CD8-positive, alpha-beta T cell (primary cell): ENCODE measurements at regions of chr1 and their contacts with region 1.

Region 1: GRCh38 chr1:201828820-201829774 is at the start of gene IPO9:
- DNase-seq: peak; percentile 89 to 96 (median 95)
- ATAC-seq: peak; percentile 96
- H3K4me3 ChIP-seq: peak within 1 kb of the TSS; percentile 95 to 100
- H3K4me3 Mint-ChIP-seq: peak within 1 kb of the TSS; percentile 97
- H3K27ac ChIP-seq: peak within 1 kb of the TSS; percentile 90
- H3K27ac Mint-ChIP-seq: peak within 1 kb of the TSS; percentile 93
- H3K4me1 ChIP-seq: peaks cover 34% of the 10 kb centered on the region
- H3K4me1 Mint-ChIP-seq: peaks cover 42% of the 10 kb centered on the region
- H3K27me3 ChIP-seq: no peaks in the 10 kb centered on the region
- H3K27me3 Mint-ChIP-seq: no peaks in the 10 kb centered on the region
- CTCF ChIP-seq: peak; percentile 96
- total RNA-seq, gene IPO9: 14.4 to 19.2 TPM

Region 2: DNA sequence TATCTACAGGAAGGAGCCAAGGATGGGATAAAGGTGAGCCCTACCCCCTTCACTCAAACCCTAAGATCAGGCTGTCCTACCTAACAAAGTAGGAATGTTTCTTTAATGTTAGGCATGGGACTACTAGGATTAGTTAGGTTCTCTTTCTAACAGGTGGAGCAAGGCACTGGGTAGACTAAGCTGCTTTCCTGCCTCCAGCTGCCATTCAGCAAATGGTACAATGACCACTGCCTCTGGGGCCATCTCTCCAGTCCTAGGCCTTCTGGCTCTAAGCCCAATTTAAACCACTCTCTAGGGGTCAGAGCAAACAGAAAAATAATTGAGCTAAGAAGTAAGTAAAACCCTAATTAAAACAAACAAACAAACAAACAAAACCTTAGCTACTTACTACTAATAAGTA is 15.9 kb before region 1 on chr1:
- CTCF ChIA-PET with region 1: interaction called, 12 read pairs
- POLR2A ChIA-PET with region 1: no interaction called
- intact Hi-C with region 1: no loop called
- DNase-seq: no peak
- ATAC-seq: no peak
- H3K4me3 ChIP-seq: no peak overlapping the region
- H3K4me3 Mint-ChIP-seq: no peak overlapping the region
- H3K27ac ChIP-seq: no peak overlapping the region
- H3K27ac Mint-ChIP-seq: no peak overlapping the region
- H3K4me1 ChIP-seq: no peaks in the 10 kb centered on the region
- H3K4me1 Mint-ChIP-seq: no peaks in the 10 kb centered on the region
- H3K27me3 ChIP-seq: no peaks in the 10 kb centered on the region
- H3K27me3 Mint-ChIP-seq: no peaks in the 10 kb centered on the region
- CTCF ChIP-seq: no peak

Region 3: DNA sequence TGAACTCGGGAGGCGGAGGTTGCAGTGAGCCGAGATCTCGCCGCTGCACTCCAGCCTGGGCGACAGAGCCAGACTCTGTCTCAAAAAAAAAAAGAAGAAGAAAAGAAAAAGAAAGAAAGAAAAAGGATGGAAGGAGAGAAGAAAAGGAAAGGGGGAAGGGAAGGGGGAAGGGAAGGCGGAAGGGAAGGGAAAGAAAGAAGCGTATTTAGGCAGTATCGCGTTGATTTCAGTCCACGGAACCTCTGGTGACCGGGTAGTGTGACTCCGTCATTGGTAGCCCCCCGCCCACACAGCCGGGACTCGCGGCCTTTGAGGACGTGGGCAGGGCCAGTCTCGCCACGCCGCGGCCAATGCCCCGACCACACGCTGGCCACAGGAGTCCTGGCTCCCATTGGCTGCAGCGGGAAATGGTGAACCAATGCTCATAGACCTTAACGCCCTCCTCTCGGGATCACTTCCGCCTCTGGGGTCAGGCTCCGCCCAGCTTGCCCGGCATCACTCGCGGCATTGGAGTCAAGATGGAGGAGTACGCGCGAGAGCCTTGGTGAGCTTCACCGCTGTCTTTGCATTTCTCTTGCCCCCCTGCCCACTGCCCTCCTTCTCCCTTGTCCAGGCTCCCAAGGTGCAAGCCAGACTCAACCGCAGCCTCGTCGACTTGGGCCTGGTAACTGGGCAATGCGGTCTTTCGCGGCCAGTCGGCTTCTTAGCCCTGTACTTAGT is 126.1 kb after region 1 on chr1 and contains the start of gene TIMM17A:
- CTCF ChIA-PET with region 1: interaction called, 3 read pairs
- POLR2A ChIA-PET with region 1: no interaction called
- intact Hi-C with region 1: loop called (anchors 1 kb)
- DNase-seq: peak; percentile 82 to 96 (median 93)
- ATAC-seq: peak; percentile 99
- H3K4me3 ChIP-seq: peak within 1 kb of the TSS; percentile 91 to 98
- H3K4me3 Mint-ChIP-seq: peak within 1 kb of the TSS; percentile 98
- H3K27ac ChIP-seq: peak within 1 kb of the TSS; percentile 86 to 94
- H3K27ac Mint-ChIP-seq: peak within 1 kb of the TSS; percentile 96
- H3K4me1 ChIP-seq: peaks cover 13% of the 10 kb centered on the region
- H3K4me1 Mint-ChIP-seq: peaks cover 31% of the 10 kb centered on the region
- H3K27me3 ChIP-seq: no peaks in the 10 kb centered on the region
- H3K27me3 Mint-ChIP-seq: no peaks in the 10 kb centered on the region
- CTCF ChIP-seq: no peak
- total RNA-seq, gene TIMM17A: 58.0 to 66.6 TPM